Activated CD4-positive, alpha-beta T cell treated with anti-CD3 and anti-CD28 coated beads, Interleukin-2, amount 10 ng/mL, durations not matched to agents 7 days and 5 days (primary cell): ENCODE measurements at regions of chr4 and their contacts with region 1.

Region 1: DNA sequence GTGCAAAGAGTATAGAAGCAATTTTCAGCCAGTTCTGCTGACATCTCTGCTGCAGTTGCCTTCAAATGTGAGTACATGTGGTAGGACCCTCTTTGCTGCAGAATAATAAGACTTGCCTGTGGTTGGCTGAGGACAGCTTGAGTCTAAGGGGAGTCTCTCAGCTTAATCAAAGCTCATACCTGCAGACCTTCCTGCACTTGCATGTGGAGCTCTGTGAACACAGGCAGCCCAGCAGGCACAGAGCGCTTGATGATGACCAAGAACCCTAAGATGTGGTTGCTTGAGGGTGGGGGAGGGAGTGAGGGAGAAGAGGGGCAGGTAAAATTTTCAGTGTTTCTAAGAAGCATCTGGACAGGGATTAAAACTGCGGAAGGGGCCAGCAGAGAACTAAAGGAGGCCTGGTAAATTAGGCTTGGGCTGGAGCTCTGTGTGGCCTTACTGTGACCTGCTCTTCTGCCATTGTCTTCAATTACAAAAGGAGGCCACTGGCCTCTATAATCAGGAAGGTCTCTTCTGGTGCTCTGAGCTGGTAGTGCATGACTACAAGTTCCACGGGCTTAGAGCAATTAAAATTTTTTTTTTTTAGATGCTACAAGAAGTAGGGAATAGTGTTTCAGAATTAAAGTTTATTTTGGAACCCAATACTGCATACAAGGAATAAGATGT is 59.9 kb upstream of the CHRNA9 start:
- DNase-seq: no peak
- H3K4me3 Mint-ChIP-seq: no peak overlapping the region
- H3K27ac Mint-ChIP-seq: no peak overlapping the region
- H3K4me1 Mint-ChIP-seq: peaks cover 24% of the 10 kb centered on the region
- H3K27me3 Mint-ChIP-seq: no peaks in the 10 kb centered on the region

Region 2: DNA sequence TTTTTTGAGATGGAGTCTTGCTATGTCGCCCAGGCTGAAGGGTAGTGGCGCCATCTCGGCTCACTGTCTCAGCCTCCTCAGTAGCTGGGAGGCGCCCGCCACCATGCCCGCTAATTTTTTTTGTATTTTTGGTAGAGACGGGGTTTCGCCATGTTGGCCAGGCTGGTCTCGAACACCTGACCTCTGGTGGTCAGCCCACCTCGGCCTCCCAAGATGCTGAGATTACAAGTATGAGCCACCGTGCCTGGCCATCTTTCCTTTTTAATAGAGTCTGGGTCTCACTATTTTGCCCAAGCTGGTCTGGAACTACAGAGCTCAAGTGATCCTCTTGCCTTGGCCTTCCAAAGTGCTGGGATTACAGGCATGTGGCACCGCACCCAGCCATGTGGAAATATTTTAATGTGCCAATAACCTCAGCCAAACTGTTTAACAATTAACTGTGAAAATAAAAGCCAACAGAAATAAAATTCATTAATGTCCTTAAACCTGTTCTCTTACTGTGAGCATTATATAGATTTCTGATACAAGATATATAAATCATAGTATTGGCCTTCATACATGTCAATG is 313.8 kb before region 1 on chr4:
- CTCF ChIA-PET with region 1: no interaction called
- POLR2A ChIA-PET with region 1: no interaction called
- DNase-seq: no peak
- H3K4me3 Mint-ChIP-seq: no peak overlapping the region
- H3K27ac Mint-ChIP-seq: no peak overlapping the region
- H3K4me1 Mint-ChIP-seq: peaks cover 18% of the 10 kb centered on the region
- H3K27me3 Mint-ChIP-seq: no peaks in the 10 kb centered on the region

Region 3: DNA sequence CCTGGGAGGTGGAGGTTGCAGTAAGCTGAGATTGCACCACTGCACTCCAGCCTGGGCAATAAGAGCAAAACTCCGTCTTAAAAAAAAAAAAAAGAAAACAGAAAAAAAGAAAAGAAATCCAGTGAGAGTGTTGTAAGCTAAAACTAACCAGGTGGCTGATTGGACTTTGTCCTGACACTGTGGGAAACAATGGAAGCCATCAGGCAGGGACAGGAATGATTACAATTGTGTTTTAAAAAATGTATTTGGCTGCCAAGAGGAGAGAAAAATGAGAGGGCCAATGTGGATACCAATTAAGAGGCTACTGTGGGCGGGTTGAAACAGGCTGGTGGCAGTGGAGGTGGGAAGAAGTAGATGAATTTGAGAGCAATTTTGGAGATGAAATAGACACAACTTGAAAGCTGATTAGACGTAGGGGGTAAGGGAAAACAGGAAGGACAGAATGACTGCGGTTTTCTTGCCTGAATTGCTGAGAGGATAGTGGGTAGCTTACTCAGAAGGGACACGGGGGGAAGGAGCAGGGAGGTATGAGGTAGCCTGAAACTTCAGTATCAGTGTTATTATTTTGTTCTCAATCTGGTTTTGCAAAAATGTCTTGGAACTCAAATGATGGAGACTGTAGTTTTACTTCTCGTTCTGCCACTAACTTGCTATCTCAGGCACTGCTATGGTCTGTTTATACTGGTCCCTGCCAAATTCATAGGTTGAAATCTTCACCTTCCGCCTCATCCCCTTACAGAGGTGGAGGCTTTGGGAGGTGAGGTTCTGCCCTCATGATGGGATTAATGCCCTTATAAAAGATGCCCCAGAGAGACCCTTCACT is 14.4 kb after region 1 on chr4:
- CTCF ChIA-PET with region 1: interaction called, 24 read pairs
- POLR2A ChIA-PET with region 1: no interaction called
- DNase-seq: no peak
- H3K4me3 Mint-ChIP-seq: peak overlapping the region; percentile 13
- H3K27ac Mint-ChIP-seq: peak overlapping the region; percentile 85
- H3K4me1 Mint-ChIP-seq: peaks cover 44% of the 10 kb centered on the region
- H3K27me3 Mint-ChIP-seq: no peaks in the 10 kb centered on the region

Region 4: GRCh38 chr4:40409835-40410234 is 134.6 kb after region 1 on chr4:
- CTCF ChIA-PET with region 1: no interaction called
- POLR2A ChIA-PET with region 1: no interaction called
- DNase-seq: no peak
- H3K4me3 Mint-ChIP-seq: no peak overlapping the region
- H3K27ac Mint-ChIP-seq: no peak overlapping the region
- H3K4me1 Mint-ChIP-seq: no peaks in the 10 kb centered on the region
- H3K27me3 Mint-ChIP-seq: peaks cover 6% of the 10 kb centered on the region